ENCODE measurements at regions of chr1 and their contacts with region 1.

Region 1: DNA sequence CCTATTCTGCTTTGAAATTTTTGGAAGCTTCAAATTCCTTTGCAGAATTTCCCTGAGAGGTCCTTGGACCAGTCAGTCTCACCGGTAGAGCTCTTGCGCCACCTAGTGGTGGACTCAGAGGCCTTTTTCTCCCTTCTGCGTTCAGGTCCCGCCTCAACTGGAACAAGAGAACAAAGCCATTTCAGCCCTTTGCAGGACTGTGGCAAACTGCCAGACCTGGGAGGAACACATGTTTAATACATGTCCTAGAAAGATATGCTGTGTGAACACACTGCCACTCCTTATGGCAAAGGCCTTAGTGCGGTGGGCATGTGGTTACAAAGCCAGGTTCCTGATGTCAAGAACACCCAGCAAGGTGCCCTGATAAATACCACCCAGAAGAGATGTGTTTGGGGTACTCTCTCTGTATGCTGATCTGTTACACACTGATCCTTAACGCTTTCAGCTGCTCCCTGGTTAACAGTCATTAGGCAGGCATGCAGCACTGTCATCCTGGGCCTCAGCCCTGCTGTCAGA is 82.2 kb upstream of the SSX2IP start:
- DNase-seq: peak; percentile 59
- H3K4me3 ChIP-seq: no peak overlapping the region
- H3K27ac ChIP-seq: no peak overlapping the region
- H3K27me3 ChIP-seq: peaks cover 7% of the 10 kb centered on the region
- CTCF ChIP-seq: peak; percentile 98

Region 2: GRCh38 chr1:83905315-83905907 is 867.1 kb before region 1 on chr1:
- CTCF ChIA-PET with region 1: interaction called, 14 read pairs
- POLR2A ChIA-PET with region 1: no interaction called
- DNase-seq: no peak
- H3K4me3 ChIP-seq: no peak overlapping the region
- H3K27ac ChIP-seq: no peak overlapping the region
- H3K27me3 ChIP-seq: no peaks in the 10 kb centered on the region
- CTCF ChIP-seq: peak; percentile 75

Region 3: DNA sequence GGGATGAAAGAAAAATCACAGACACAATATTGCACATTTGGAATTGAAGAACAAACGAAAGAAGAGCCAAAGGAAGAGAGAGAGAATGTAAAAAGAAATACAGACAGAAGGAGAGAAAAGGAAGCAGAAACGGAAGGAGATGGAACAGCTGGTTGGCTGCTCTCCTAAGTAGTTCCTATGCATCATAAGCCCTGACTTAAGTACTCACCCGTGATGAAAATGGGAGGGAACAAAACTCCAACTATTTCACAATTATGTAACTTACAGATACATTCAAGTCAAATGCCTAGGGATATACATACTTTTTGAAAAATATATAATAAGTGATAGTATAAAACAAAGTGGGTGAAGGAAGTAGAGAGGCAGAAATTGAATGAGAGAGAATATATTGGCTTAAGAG is 862.0 kb before region 1 on chr1:
- CTCF ChIA-PET with region 1: interaction called, 14 read pairs
- POLR2A ChIA-PET with region 1: no interaction called
- DNase-seq: no peak
- H3K4me3 ChIP-seq: no peak overlapping the region
- H3K27ac ChIP-seq: no peak overlapping the region
- H3K27me3 ChIP-seq: no peaks in the 10 kb centered on the region
- CTCF ChIP-seq: no peak

Region 4: DNA sequence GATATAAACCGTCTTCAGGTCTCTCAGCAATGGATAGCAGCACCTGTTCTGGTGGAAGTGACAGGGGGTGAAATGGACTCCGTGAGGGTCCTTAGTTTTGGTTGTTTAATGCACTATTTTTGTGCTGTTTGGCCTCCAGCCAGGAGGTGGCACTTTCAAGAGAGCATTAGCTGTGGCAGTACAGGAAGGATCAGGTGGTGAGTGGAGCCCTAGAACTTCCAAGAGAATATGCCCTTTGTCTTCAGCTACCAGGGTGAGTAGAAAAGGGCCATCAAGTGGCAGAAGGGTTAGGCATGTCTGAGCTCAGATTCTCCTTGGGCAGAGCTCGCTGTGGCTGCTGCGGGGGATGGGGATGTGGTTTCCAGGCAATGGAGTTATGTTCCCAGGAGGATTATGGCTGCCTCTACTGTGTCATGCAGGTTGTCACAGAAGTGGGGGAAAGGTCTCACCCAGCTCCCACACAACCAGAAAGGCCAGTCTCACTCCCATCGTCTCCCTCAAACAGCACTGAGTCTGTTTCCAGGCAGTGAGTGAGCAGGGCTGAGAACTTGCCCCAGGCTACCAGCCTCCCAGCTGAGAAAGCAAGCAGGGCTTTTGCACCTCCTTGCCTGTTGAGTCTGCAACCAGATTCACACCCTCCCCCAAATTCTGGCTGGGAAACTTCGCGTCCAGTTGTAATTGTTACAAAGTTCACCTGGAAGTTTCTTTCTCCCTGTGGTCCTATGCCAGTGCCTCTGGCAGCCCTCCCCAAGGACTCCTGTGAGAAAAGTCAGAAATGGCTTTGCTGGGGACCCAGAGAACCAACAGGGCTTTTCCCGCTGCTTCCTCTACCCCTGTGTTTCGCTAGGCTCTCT is 734.5 kb before region 1 on chr1:
- CTCF ChIA-PET with region 1: no interaction called
- POLR2A ChIA-PET with region 1: no interaction called
- DNase-seq: no peak
- H3K4me3 ChIP-seq: no peak overlapping the region
- H3K27ac ChIP-seq: no peak overlapping the region
- H3K27me3 ChIP-seq: peaks cover 7% of the 10 kb centered on the region
- CTCF ChIP-seq: no peak

Region 5: GRCh38 chr1:84143796-84144565 is 628.5 kb before region 1 on chr1 and contains the start of gene PRKACB:
- CTCF ChIA-PET with region 1: interaction called, 29 read pairs
- POLR2A ChIA-PET with region 1: no interaction called
- DNase-seq: no peak
- H3K4me3 ChIP-seq: no peak within 1 kb of the TSS
- H3K27ac ChIP-seq: no peak within 1 kb of the TSS
- H3K27me3 ChIP-seq: no peaks in the 10 kb centered on the region
- CTCF ChIP-seq: no peak
- polyA plus RNA-seq, gene PRKACB: 25.2 and 33.4 TPM in 2 replicates

Region 6: DNA sequence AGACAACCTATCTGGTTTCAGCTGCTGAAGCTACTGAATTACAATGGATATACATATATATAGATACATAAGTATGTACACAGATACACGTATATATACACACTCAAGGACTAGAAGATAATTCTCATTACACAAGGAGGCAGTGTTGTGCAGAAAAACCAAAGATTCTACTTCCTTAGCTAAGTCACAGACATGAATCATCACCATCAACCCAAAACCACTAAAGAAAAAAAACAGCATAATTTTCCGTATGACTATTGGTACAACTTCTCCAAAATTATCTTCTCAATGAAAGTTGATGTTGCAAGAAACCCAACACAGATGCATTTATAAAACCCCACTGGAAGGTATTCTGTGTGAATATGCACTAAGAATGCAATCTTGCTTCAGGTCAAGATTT is 330.2 kb before region 1 on chr1:
- CTCF ChIA-PET with region 1: interaction called, 28 read pairs
- POLR2A ChIA-PET with region 1: no interaction called
- DNase-seq: peak; percentile 78
- H3K4me3 ChIP-seq: no peak overlapping the region
- H3K27ac ChIP-seq: no peak overlapping the region
- H3K27me3 ChIP-seq: no peaks in the 10 kb centered on the region
- CTCF ChIP-seq: peak; percentile 57

Region 7: GRCh38 chr1:84712276-84712874 is 60.1 kb before region 1 on chr1:
- CTCF ChIA-PET with region 1: no interaction called
- POLR2A ChIA-PET with region 1: no interaction called
- DNase-seq: peak; percentile 85
- H3K4me3 ChIP-seq: no peak overlapping the region
- H3K27ac ChIP-seq: peak overlapping the region; percentile 47
- H3K27me3 ChIP-seq: no peaks in the 10 kb centered on the region
- CTCF ChIP-seq: no peak

Region 8: GRCh38 chr1:84758968-84759491 is 13.5 kb before region 1 on chr1:
- CTCF ChIA-PET with region 1: interaction called, 21 read pairs
- POLR2A ChIA-PET with region 1: no interaction called
- DNase-seq: no peak
- H3K4me3 ChIP-seq: no peak overlapping the region
- H3K27ac ChIP-seq: no peak overlapping the region
- H3K27me3 ChIP-seq: peaks cover 4% of the 10 kb centered on the region
- CTCF ChIP-seq: no peak

Region 9: DNA sequence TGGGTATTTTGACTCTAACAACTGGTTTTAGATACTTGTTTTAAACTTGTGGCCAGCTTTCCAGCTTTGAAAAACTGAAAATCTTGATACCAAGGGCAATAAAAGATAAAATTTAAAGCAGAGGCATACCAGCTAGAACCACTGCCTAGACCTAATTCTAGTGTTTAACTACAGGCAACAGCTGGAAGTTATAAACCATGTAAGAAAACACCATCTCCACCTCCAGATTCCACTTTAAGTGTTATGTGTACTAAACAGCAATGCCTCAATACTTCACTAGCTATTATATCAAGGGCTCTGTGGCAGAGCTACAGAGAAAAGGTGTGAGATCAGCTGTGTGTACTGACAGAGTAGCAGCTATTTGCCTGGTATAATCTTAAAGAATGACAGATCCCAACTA is 51.0 kb after region 1 on chr1:
- CTCF ChIA-PET with region 1: no interaction called
- POLR2A ChIA-PET with region 1: no interaction called
- DNase-seq: no peak
- H3K4me3 ChIP-seq: no peak overlapping the region
- H3K27ac ChIP-seq: no peak overlapping the region
- H3K27me3 ChIP-seq: peaks cover 5% of the 10 kb centered on the region
- CTCF ChIP-seq: no peak

Region 10: GRCh38 chr1:84847253-84848250 is 75.1 kb after region 1 on chr1:
- CTCF ChIA-PET with region 1: no interaction called
- POLR2A ChIA-PET with region 1: no interaction called
- DNase-seq: peak; percentile 89
- H3K4me3 ChIP-seq: no peak overlapping the region
- H3K27ac ChIP-seq: no peak overlapping the region
- H3K27me3 ChIP-seq: no peaks in the 10 kb centered on the region
- CTCF ChIP-seq: no peak

Region 11: GRCh38 chr1:84936116-84936810 is 163.8 kb after region 1 on chr1:
- CTCF ChIA-PET with region 1: interaction called, 39 read pairs
- POLR2A ChIA-PET with region 1: no interaction called
- DNase-seq: peak; percentile 38
- H3K4me3 ChIP-seq: no peak overlapping the region
- H3K27ac ChIP-seq: no peak overlapping the region
- H3K27me3 ChIP-seq: no peaks in the 10 kb centered on the region
- CTCF ChIP-seq: peak; percentile 95